Activated naive CD4-positive, alpha-beta T cell treated with anti-CD3 and anti-CD28 coated beads for 36 hours (primary cell): ENCODE measurements at regions of chr18 and their contacts with region 1.

Region 1: DNA sequence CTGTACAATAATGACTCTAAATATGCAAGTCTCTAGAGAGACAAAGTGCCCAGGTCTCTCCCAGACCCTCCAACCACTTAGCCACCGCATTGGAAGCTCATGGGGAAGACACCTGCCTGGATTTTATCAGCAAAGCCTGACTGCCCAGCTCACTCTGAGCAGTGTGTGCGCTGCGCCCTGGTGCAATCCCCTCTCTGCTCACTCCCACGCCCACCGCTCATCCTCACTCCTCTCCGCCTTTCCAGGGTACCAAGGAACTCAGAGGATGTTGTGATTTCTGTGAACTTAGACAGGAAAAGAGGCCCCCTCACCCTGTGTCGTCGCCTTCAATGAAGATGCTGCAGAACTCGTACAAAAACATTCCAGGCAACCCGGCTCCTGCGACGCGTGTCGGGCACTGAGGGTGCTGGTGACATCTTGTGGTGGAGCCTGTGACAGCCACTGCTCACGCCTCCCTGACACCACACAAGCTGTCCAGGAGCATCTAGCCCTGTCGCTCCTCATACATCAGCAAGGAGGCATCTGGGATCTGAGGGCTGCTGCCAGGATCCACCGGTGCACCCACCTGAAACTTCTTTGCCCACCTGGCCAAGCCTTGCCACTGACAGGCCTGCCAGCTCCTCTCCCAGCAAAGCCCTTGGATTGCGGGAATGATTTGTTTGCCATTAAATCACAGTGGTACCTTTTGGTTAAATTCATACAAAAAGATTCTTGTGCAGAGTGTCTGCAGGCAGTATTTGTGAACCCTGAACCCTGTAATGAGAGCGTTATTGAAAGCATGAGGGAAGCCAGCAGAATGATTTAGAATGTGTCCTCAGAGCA is 220.4 kb downstream of the ZNF516 start:
- DNase-seq: peak; percentile 26
- H3K4me3 Mint-ChIP-seq: no peak overlapping the region
- H3K27ac Mint-ChIP-seq: no peak overlapping the region
- H3K4me1 Mint-ChIP-seq: no peaks in the 10 kb centered on the region
- H3K27me3 Mint-ChIP-seq: no peaks in the 10 kb centered on the region

Region 2: GRCh38 chr18:76349067-76349715 is 74.5 kb after region 1 on chr18:
- CTCF ChIA-PET with region 1: no interaction called
- intact Hi-C with region 1: loop called (anchors 5 kb)
- DNase-seq: peak; percentile 80
- H3K4me3 Mint-ChIP-seq: no peak overlapping the region
- H3K27ac Mint-ChIP-seq: no peak overlapping the region
- H3K4me1 Mint-ChIP-seq: peaks cover 9% of the 10 kb centered on the region
- H3K27me3 Mint-ChIP-seq: peaks cover 7% of the 10 kb centered on the region

Region 3: GRCh38 chr18:76643996-76644395 is 369.3 kb after region 1 on chr18:
- CTCF ChIA-PET with region 1: no interaction called
- intact Hi-C with region 1: no loop called
- DNase-seq: no peak
- H3K4me3 Mint-ChIP-seq: no peak overlapping the region
- H3K27ac Mint-ChIP-seq: no peak overlapping the region
- H3K4me1 Mint-ChIP-seq: no peaks in the 10 kb centered on the region
- H3K27me3 Mint-ChIP-seq: peaks cover 3% of the 10 kb centered on the region